ENCODE measurements at regions of chr6 and their contacts with region 1.

Region 1: GRCh38 chr6:126015863-126016262 is 29.5 kb downstream of the TRMT11 start:
- DNase-seq: no peak
- H3K4me3 ChIP-seq: no peak overlapping the region
- H3K27ac ChIP-seq: no peak overlapping the region
- H3K27me3 ChIP-seq: no peaks in the 10 kb centered on the region
- CTCF ChIP-seq: no peak

Region 2: GRCh38 chr6:125995972-125996580 is 19.8 kb before region 1 on chr6:
- CTCF ChIA-PET with region 1: interaction called, 34 read pairs
- POLR2A ChIA-PET with region 1: no interaction called
- DNase-seq: no peak
- H3K4me3 ChIP-seq: no peak overlapping the region
- H3K27ac ChIP-seq: no peak overlapping the region
- H3K27me3 ChIP-seq: no peaks in the 10 kb centered on the region
- CTCF ChIP-seq: peak; percentile 99

Region 3: GRCh38 chr6:126033696-126034095 is 17.8 kb after region 1 on chr6:
- CTCF ChIA-PET with region 1: interaction called, 10 read pairs
- POLR2A ChIA-PET with region 1: no interaction called
- DNase-seq: peak; percentile 73
- H3K4me3 ChIP-seq: no peak overlapping the region
- H3K27ac ChIP-seq: no peak overlapping the region
- H3K27me3 ChIP-seq: no peaks in the 10 kb centered on the region
- CTCF ChIP-seq: peak; percentile 83

Measured in AG04450 (cell line).